A549 (cell line): ENCODE measurements at regions of chr10 and their contacts with region 1.

Region 1: DNA sequence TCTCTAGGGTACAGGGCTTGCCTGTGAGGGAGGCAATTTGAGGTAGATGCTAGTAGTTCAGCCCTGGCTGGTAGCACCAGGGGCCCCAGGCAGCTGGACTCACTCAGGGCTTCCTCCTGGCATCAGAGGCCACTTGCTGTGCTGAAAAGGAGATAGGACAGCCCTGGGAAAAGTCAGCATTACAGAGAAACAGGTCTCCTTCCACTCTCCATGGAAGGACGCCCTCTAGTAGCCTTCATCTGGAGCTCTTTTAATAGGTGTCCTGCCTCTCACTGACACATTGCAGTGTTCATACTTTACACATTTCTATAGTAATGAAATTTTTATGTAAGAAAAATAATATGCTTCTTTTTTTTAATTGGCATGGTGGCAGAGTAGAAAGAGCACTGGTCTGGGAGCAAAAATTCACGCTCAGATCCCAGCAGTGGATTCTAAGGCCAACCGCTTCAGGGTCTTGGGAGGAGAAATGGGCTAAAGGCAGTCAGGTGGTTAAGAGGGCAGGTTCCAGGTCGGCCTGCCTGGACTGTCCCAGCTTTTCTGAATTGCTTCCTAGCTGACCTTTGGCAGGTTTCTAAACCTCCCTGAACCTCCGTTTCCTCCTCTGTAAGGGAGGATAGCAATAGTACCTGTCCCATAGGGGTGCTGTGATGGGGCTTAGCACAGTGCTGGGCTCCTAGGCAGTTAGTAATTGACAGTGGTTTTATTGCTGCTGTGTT is 35.8 kb downstream of the AIFM2 start:
- DNase-seq: no peak
- ATAC-seq: no peak
- H3K4me3 ChIP-seq: no peak overlapping the region
- H3K27ac ChIP-seq: no peak overlapping the region
- H3K4me1 ChIP-seq: no peaks in the 10 kb centered on the region
- CTCF ChIP-seq: no peak
- EP300 ChIP-seq: no peak
- POLR2A ChIP-seq: no peak
- RAD21 ChIP-seq: no peak

Region 2: DNA sequence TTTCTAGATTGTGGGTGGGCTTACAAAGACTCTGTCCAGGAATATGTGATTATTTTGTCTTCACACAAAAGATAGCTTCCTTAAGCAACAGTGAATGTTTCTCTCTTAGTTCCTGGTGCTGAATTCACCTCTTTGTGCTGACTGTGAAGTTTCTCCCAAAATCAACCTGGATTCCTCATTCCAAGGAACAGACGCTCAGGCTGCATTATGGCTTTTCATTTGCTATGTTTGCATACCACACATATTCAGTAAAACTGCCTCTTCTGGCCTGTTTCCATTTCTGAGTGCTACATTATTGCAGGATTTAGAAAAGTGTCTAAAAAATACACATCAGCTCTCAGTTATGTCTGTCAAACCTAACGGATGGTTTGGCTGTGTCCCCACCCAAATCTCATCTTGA is 22.7 kb before region 1 on chr10:
- CTCF ChIA-PET with region 1: no interaction called
- POLR2A ChIA-PET with region 1: no interaction called
- DNase-seq: no peak
- ATAC-seq: no peak
- H3K4me3 ChIP-seq: no peak overlapping the region
- H3K27ac ChIP-seq: no peak overlapping the region
- H3K4me1 ChIP-seq: no peaks in the 10 kb centered on the region
- CTCF ChIP-seq: no peak
- EP300 ChIP-seq: no peak
- POLR2A ChIP-seq: no peak
- RAD21 ChIP-seq: no peak

Region 3: GRCh38 chr10:70106958-70107791 is 10.3 kb after region 1 on chr10:
- CTCF ChIA-PET with region 1: interaction called, 29 read pairs
- POLR2A ChIA-PET with region 1: no interaction called
- DNase-seq: peak in 1 of 2 experiments; percentile 46
- ATAC-seq: peak; percentile 70 to 86; a peak in 5 of 6 replicates
- H3K4me3 ChIP-seq: no peak overlapping the region
- H3K27ac ChIP-seq: peak overlapping the region in 1 of 2 experiments; percentile 7; a peak in 1 of 6 replicates
- H3K4me1 ChIP-seq: no peaks in the 10 kb centered on the region
- CTCF ChIP-seq: peak; percentile 52
- EP300 ChIP-seq: no peak
- POLR2A ChIP-seq: no peak
- RAD21 ChIP-seq: peak in 1 of 2 experiments; percentile 33; a peak in 2 of 5 replicates

Region 4: GRCh38 chr10:70337201-70337651 is 240.4 kb after region 1 on chr10:
- CTCF ChIA-PET with region 1: no interaction called
- POLR2A ChIA-PET with region 1: no interaction called
- DNase-seq: no peak
- ATAC-seq: no peak
- H3K4me3 ChIP-seq: no peak overlapping the region
- H3K27ac ChIP-seq: no peak overlapping the region
- H3K4me1 ChIP-seq: peaks cover 14% of the 10 kb centered on the region
- CTCF ChIP-seq: no peak
- EP300 ChIP-seq: no peak
- POLR2A ChIP-seq: no peak
- RAD21 ChIP-seq: no peak